Left ventricle myocardium superior (tissue), 1 donor: ENCODE measurements at regions of chr5 and their contacts with region 1.

Region 1: GRCh38 chr5:54905943-54906537 is 79.4 kb downstream of the ESM1 start:
- DNase-seq: peak; percentile 69
- ATAC-seq: peak; percentile 26

Region 2: DNA sequence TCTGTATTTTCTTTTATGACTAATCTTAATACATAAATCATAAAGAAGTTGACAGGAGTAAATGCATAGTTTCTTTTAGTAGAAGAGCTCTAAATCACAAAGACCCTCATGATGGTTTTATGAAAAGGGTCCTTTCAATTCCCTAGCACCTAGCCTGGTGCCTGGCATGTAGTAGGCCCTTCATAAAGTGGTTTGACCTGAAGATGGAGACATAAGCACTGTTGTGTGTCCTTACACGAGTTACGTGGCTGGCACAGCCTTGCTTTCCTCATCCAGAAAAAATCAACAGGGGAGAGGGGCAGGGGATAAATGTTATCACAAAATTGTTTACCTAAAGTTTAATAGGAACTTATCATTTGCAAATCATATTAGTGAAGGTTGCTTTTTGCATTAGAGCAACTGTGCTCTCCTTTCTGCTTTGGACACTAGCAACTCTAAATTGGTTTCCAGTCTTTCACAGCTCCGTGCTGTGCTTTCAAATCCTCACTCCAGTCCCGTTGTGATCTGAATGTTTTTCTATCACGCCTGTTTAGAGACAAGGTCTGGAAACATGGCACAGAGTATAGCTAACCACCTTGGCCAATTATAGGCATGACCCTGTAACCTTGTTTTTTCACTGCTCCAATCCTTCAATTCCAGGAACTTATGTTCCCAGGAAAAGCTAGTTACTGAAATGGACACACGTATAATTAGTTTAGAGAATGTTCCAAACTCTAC is 651.4 kb before region 1 on chr5:
- intact Hi-C with region 1: no loop called
- DNase-seq: peak; percentile 34
- ATAC-seq: peak; percentile 89

Region 3: GRCh38 chr5:55141945-55142690 is 236.1 kb after region 1 on chr5:
- intact Hi-C with region 1: loop called (anchors 5 kb)
- DNase-seq: no peak
- ATAC-seq: no peak